Stomach (tissue), 19 donors: ENCODE measurements at regions of chr9 and their contacts with region 1.

Region 1: GRCh38 chr9:75242426-75242825 is 154.1 kb downstream of the OSTF1 start:
- DNase-seq: no peak
- H3K4me3 ChIP-seq: no peak overlapping the region
- H3K27ac ChIP-seq: no peak overlapping the region
- H3K4me1 ChIP-seq: peaks cover 0 to 6% (median 2%) of the 10 kb centered on the region in 4 donors
- H3K27me3 ChIP-seq: no peaks in the 10 kb centered on the region
- CTCF ChIP-seq: no peak
- EP300 ChIP-seq: no peak
- POLR2A ChIP-seq: no peak

Region 2: GRCh38 chr9:75148561-75148960 is 93.9 kb before region 1 on chr9:
- intact Hi-C with region 1: no loop called
- DNase-seq: peak in 1 of 2 donors; percentile 38
- H3K4me3 ChIP-seq: no peak overlapping the region
- H3K27ac ChIP-seq: peak overlapping the region in 3 of 5 donors; percentile 19 to 54 (median 29)
- H3K4me1 ChIP-seq: peaks cover 0 to 41% (median 3%) of the 10 kb centered on the region in 4 donors
- H3K27me3 ChIP-seq: no peaks in the 10 kb centered on the region
- CTCF ChIP-seq: no peak
- EP300 ChIP-seq: no peak
- POLR2A ChIP-seq: no peak

Region 3: GRCh38 chr9:75197561-75197960 is 44.9 kb before region 1 on chr9:
- intact Hi-C with region 1: loop called (anchors 10 kb)
- DNase-seq: no peak
- H3K4me3 ChIP-seq: no peak overlapping the region
- H3K27ac ChIP-seq: no peak overlapping the region
- H3K4me1 ChIP-seq: no peaks in the 10 kb centered on the region
- H3K27me3 ChIP-seq: no peaks in the 10 kb centered on the region
- CTCF ChIP-seq: no peak
- EP300 ChIP-seq: no peak
- POLR2A ChIP-seq: no peak